Activated CD8-positive, alpha-beta T cell treated with anti-CD3 and anti-CD28 coated beads for 36 hours (primary cell): ENCODE measurements at regions of chr6 and their contacts with region 1.

Region 1: GRCh38 chr6:35139908-35140655 is 1.1 kb downstream of the TCP11 start:
- DNase-seq: peak; percentile 68
- ATAC-seq: peak; percentile 73
- H3K4me3 Mint-ChIP-seq: peak overlapping the region; percentile 12
- H3K27ac Mint-ChIP-seq: no peak overlapping the region
- H3K4me1 Mint-ChIP-seq: peaks cover 13% of the 10 kb centered on the region
- H3K27me3 Mint-ChIP-seq: peaks cover 13% of the 10 kb centered on the region
- CTCF ChIP-seq: peak; percentile 91

Region 2: DNA sequence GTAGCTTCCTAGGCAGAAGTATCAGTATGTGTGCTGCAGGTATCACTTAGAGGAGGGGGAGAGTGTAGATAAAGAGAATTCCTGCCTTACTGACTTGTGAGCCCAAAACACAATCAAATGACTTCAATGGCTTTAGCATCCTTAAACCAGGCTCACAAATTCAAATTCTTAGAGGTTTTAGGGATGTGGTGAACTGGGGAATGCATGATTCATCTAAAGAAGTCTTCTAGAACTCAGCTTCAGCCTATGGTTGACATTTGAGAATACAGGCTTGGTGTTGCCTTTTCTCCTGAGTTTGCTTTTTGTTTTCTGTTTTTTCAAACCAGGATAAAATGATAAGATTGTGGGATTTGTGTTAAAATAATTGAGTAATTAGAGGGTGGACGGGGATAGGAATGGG is 368.4 kb before region 1 on chr6:
- CTCF ChIA-PET with region 1: no interaction called
- POLR2A ChIA-PET with region 1: no interaction called
- intact Hi-C with region 1: no loop called
- DNase-seq: no peak
- ATAC-seq: no peak
- H3K4me3 Mint-ChIP-seq: no peak overlapping the region
- H3K27ac Mint-ChIP-seq: no peak overlapping the region
- H3K4me1 Mint-ChIP-seq: peaks cover 17% of the 10 kb centered on the region
- H3K27me3 Mint-ChIP-seq: no peaks in the 10 kb centered on the region
- CTCF ChIP-seq: no peak

Region 3: DNA sequence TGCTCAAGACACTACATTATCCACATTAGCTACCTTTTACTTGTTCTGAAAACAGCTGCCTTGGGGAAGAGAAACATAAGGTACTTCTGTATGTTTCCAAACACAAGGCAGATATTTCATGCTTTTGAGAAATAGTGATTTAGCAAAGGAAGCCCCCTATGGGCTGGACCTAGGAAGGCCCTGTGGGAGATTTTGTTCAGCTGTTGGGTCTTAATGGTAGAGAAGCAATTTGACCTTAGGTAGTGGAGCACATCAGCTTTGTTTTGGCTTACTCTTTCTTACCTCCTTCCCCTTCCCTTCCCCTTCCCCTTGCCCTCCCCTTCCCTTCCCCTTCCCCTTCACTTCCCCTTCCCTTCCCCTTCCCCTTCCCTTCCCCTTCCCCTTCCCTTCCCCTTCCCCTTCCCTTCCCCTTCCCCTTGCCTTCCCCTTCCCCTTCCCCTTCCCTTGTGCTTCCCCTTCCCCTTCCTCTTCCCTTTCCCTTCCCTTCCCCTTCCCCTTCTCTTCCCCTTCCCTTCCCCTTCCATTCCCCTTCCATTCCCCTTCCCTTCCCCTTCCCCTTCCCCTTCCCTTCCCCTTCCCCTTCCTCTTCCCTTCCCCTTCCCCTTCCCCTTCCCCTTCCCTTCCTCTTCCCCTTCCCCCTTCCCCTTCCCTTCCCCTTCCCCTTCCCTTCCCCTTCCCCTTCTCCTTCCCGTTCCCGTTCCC is 166.4 kb before region 1 on chr6:
- CTCF ChIA-PET with region 1: interaction called, 11 read pairs
- POLR2A ChIA-PET with region 1: no interaction called
- intact Hi-C with region 1: no loop called
- DNase-seq: peak; percentile 21
- ATAC-seq: no peak
- H3K4me3 Mint-ChIP-seq: no peak overlapping the region
- H3K27ac Mint-ChIP-seq: no peak overlapping the region
- H3K4me1 Mint-ChIP-seq: no peaks in the 10 kb centered on the region
- H3K27me3 Mint-ChIP-seq: no peaks in the 10 kb centered on the region
- CTCF ChIP-seq: peak; percentile 20

Region 4: DNA sequence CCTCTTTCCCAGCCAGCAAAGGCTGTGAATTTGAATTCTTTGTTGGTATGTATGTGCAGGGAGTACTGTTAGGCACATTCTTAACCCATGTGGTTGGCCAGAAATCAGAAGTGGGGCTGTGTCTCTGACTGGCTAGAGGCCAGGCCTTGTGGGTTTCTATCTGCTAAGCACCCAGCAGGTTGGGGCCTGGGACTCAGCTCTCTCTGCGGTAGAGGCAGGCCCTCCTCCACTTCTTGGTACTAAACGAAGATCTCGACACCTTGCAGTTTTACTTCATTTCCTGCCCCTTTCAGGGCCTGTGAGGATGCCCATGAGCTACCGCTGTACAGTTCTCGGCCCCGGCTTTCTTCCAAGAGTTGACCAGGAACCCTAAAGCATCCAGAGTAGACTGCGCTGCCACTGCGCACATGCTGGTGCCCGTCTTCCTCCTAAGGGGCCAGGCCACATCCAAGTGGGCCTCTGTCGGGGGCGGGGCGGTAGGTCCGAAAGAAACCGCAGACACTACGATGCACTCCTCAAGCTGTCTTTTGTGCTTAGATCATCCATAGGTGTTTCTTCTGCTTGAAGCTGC is 50.1 kb before region 1 on chr6:
- CTCF ChIA-PET with region 1: interaction called, 10 read pairs
- POLR2A ChIA-PET with region 1: no interaction called
- intact Hi-C with region 1: no loop called
- DNase-seq: peak; percentile 5
- ATAC-seq: no peak
- H3K4me3 Mint-ChIP-seq: no peak overlapping the region
- H3K27ac Mint-ChIP-seq: no peak overlapping the region
- H3K4me1 Mint-ChIP-seq: no peaks in the 10 kb centered on the region
- H3K27me3 Mint-ChIP-seq: no peaks in the 10 kb centered on the region
- CTCF ChIP-seq: no peak

Region 5: DNA sequence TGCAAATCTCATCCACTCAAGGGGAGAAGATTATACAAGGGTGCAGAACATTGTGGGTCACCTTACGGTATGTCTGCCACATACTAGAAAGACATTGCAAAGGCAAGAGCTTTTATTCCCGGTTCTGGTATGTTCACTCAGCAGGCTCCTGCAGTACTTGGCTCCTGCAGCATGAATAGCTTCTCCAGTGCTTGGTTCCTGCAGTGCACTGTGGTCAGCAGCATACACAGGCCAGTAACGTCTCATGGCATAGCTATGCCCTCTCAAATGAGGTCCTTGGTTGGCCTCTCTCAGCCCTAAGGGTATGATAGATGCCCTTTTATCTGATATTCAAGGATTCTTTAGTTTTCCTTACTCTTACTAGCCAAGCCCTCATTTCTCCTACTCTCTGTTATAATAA is 11.6 kb before region 1 on chr6:
- CTCF ChIA-PET with region 1: interaction called, 30 read pairs
- POLR2A ChIA-PET with region 1: no interaction called
- intact Hi-C with region 1: no loop called
- DNase-seq: no peak
- ATAC-seq: no peak
- H3K4me3 Mint-ChIP-seq: no peak overlapping the region
- H3K27ac Mint-ChIP-seq: no peak overlapping the region
- H3K4me1 Mint-ChIP-seq: no peaks in the 10 kb centered on the region
- H3K27me3 Mint-ChIP-seq: peaks cover 9% of the 10 kb centered on the region
- CTCF ChIP-seq: no peak

Region 6: GRCh38 chr6:35202066-35202546 is 62.0 kb after region 1 on chr6:
- CTCF ChIA-PET with region 1: interaction called, 68 read pairs
- POLR2A ChIA-PET with region 1: no interaction called
- intact Hi-C with region 1: loop called (anchors 5 kb)
- DNase-seq: no peak
- ATAC-seq: no peak
- H3K4me3 Mint-ChIP-seq: no peak overlapping the region
- H3K27ac Mint-ChIP-seq: no peak overlapping the region
- H3K4me1 Mint-ChIP-seq: no peaks in the 10 kb centered on the region
- H3K27me3 Mint-ChIP-seq: peaks cover 35% of the 10 kb centered on the region
- CTCF ChIP-seq: no peak

Region 7: GRCh38 chr6:35240840-35241801 is 101.0 kb after region 1 on chr6:
- CTCF ChIA-PET with region 1: interaction called, 74 read pairs
- POLR2A ChIA-PET with region 1: no interaction called
- intact Hi-C with region 1: loop called (anchors 5 kb)
- DNase-seq: peak; percentile 84
- ATAC-seq: peak; percentile 95
- H3K4me3 Mint-ChIP-seq: no peak overlapping the region
- H3K27ac Mint-ChIP-seq: no peak overlapping the region
- H3K4me1 Mint-ChIP-seq: no peaks in the 10 kb centered on the region
- H3K27me3 Mint-ChIP-seq: no peaks in the 10 kb centered on the region
- CTCF ChIP-seq: peak; percentile 98

Region 8: GRCh38 chr6:36094753-36095496 is 954.8 kb after region 1 on chr6:
- CTCF ChIA-PET with region 1: no interaction called
- POLR2A ChIA-PET with region 1: no interaction called
- intact Hi-C with region 1: no loop called
- DNase-seq: peak; percentile 90
- ATAC-seq: peak; percentile 82
- H3K4me3 Mint-ChIP-seq: no peak overlapping the region
- H3K27ac Mint-ChIP-seq: peak overlapping the region; percentile 67
- H3K4me1 Mint-ChIP-seq: peaks cover 32% of the 10 kb centered on the region
- H3K27me3 Mint-ChIP-seq: no peaks in the 10 kb centered on the region
- CTCF ChIP-seq: peak; percentile 96